ENCODE measurements at regions of chr9 and their contacts with region 1.

Region 1: GRCh38 chr9:71604197-71605063 is 163.9 kb downstream of the CEMIP2 start:
- DNase-seq: peak; percentile 63 to 83 (median 74)
- ATAC-seq: peak; percentile 71 to 99 (median 92)
- H3K4me3 ChIP-seq: no peak overlapping the region
- H3K27ac ChIP-seq: no peak overlapping the region
- H3K4me1 ChIP-seq: no peaks in the 10 kb centered on the region
- H3K27me3 ChIP-seq: no peaks in the 10 kb centered on the region
- CTCF ChIP-seq: peak; percentile 48 to 80 (median 73)

Region 2: DNA sequence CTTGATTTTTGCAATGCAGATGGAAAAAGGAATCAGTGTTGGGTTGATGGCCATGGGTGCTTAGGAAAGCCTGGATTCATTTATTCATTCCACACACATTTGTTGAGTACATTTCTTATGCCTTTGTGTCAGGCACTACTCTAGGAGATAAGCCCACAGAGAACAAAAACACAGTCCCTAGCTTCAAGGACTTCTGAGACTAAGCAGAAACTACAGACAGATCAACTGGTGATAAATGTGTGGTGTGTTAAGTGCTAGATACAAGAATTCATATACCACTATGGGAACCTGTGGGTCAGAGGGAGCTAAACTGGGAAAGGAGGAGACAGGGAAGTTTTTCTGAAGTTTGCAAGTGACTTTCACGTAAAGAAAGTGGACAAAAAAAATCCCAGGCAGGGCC is 44.0 kb after region 1 on chr9:
- intact Hi-C with region 1: no loop called
- DNase-seq: no peak
- ATAC-seq: no peak
- H3K4me3 ChIP-seq: no peak overlapping the region
- H3K27ac ChIP-seq: no peak overlapping the region
- H3K4me1 ChIP-seq: no peaks in the 10 kb centered on the region
- H3K27me3 ChIP-seq: no peaks in the 10 kb centered on the region
- CTCF ChIP-seq: no peak

Region 3: GRCh38 chr9:71769175-71770161 is 165.0 kb after region 1 on chr9:
- intact Hi-C with region 1: loop called in 1 of 3 experiments (anchors 5 kb)
- DNase-seq: peak; percentile 93 to 98 (median 95)
- ATAC-seq: peak; percentile 74 to 79 (median 76)
- H3K4me3 ChIP-seq: peak overlapping the region; percentile 73 to 85 (median 78)
- H3K27ac ChIP-seq: peak overlapping the region; percentile 90 to 98 (median 96)
- H3K4me1 ChIP-seq: peaks cover 13 to 21% (median 15%) of the 10 kb centered on the region in 3 donors
- H3K27me3 ChIP-seq: no peaks in the 10 kb centered on the region
- CTCF ChIP-seq: peak; percentile 23 to 45 (median 28)